Activated CD4-positive, alpha-beta T cell treated with anti-CD3 and anti-CD28 coated beads for 36 hours (primary cell): ENCODE measurements at regions of chr22 and their contacts with region 1.

Region 1: DNA sequence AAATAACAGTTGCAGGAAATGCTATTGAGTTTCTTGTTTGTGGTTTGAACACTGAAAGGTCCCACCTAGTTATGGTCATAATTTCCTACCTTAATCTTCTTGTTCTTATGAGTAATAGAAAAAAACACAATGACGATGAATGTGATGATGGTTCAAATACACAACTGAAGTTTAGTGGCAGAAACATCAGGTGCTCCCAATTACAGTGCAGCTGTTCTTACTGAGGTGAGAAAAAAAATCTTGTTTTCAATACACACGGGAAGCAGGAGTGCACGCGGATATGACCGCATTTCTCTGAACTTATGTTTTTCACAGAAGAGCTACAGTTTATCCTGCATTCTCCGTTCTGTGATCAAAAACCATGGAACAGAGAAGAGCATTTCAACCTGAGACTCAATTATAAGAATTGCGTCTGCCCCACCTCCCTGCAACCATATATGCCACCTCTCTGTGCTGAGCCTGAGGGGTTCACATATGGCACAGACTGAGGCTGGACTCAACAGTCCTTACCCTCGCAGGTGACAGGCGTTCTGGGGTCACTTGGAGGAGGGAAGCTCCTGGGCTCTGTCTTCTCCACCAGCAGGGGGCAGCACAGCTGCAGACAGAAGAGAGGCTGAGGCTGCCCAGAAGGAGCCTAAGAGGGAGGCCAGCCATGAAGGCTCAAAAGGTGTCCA is 99.7 kb upstream of the IGLL5 start:
- DNase-seq: peak; percentile 83
- ATAC-seq: peak; percentile 88
- H3K4me3 Mint-ChIP-seq: no peak overlapping the region
- H3K27ac Mint-ChIP-seq: no peak overlapping the region
- H3K4me1 Mint-ChIP-seq: peaks cover 44% of the 10 kb centered on the region
- H3K27me3 Mint-ChIP-seq: no peaks in the 10 kb centered on the region

Region 2: DNA sequence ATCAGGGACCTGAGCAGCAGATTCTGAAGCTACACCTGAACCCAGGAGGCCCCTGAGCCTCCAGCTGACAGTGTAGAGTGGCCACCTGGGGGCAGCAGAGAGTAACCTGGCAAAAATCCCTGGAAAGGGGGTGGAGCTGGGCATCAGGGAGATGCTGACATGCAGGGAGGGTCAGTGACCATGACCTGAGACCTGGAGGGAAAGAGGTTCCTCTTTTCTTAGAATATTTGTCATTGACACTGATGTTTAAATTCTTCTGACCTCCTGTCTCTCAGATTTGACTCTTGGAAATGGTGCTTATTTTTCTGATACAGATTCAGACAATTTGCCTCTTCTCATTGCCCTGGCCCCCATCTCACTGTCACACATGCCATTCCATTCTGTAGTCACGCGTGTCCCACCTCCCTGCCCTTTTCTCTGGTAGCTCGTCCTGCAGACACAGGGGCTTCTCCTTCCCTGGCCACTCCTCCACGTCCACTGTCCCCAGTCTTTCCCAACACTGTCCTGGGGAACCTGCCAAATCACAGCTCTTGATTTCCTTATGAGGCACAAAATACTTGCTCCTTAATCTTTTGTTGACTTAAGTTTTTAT is 17.5 kb before region 1 on chr22:
- CTCF ChIA-PET with region 1: interaction called, 12 read pairs
- POLR2A ChIA-PET with region 1: no interaction called
- intact Hi-C with region 1: no loop called
- DNase-seq: peak; percentile 74
- ATAC-seq: peak; percentile 71
- H3K4me3 Mint-ChIP-seq: no peak overlapping the region
- H3K27ac Mint-ChIP-seq: no peak overlapping the region
- H3K4me1 Mint-ChIP-seq: peaks cover 2% of the 10 kb centered on the region
- H3K27me3 Mint-ChIP-seq: peaks cover 6% of the 10 kb centered on the region

Region 3: GRCh38 chr22:22848364-22848866 is 60.5 kb after region 1 on chr22:
- CTCF ChIA-PET with region 1: interaction called, 12 read pairs
- POLR2A ChIA-PET with region 1: no interaction called
- intact Hi-C with region 1: no loop called
- DNase-seq: peak; percentile 85
- ATAC-seq: peak; percentile 92
- H3K4me3 Mint-ChIP-seq: no peak overlapping the region
- H3K27ac Mint-ChIP-seq: no peak overlapping the region
- H3K4me1 Mint-ChIP-seq: peaks cover 34% of the 10 kb centered on the region
- H3K27me3 Mint-ChIP-seq: no peaks in the 10 kb centered on the region

Region 4: GRCh38 chr22:22942511-22943329 is 154.8 kb after region 1 on chr22:
- CTCF ChIA-PET with region 1: no interaction called
- POLR2A ChIA-PET with region 1: no interaction called
- intact Hi-C with region 1: loop called in 1 of 2 experiments (anchors 5 kb)
- DNase-seq: peak; percentile 92
- ATAC-seq: peak; percentile 90
- H3K4me3 Mint-ChIP-seq: no peak overlapping the region
- H3K27ac Mint-ChIP-seq: no peak overlapping the region
- H3K4me1 Mint-ChIP-seq: peaks cover 2% of the 10 kb centered on the region
- H3K27me3 Mint-ChIP-seq: no peaks in the 10 kb centered on the region

Region 5: GRCh38 chr22:23315341-23315917 is 527.5 kb after region 1 on chr22:
- CTCF ChIA-PET with region 1: no interaction called
- POLR2A ChIA-PET with region 1: interaction called, 10 read pairs
- intact Hi-C with region 1: no loop called
- DNase-seq: peak; percentile 65
- ATAC-seq: no peak
- H3K4me3 Mint-ChIP-seq: no peak overlapping the region
- H3K27ac Mint-ChIP-seq: no peak overlapping the region
- H3K4me1 Mint-ChIP-seq: no peaks in the 10 kb centered on the region
- H3K27me3 Mint-ChIP-seq: no peaks in the 10 kb centered on the region